ENCODE measurements at regions of chr17 and their contacts with region 1.

Region 1: GRCh38 chr17:37650419-37651003 is 7.3 kb upstream of the DDX52 start:
- DNase-seq: peak; percentile 19 to 48
- H3K4me3 ChIP-seq: no peak overlapping the region
- H3K27ac ChIP-seq: no peak overlapping the region
- H3K4me1 ChIP-seq: peaks cover 11% of the 10 kb centered on the region
- H3K27me3 ChIP-seq: no peaks in the 10 kb centered on the region
- CTCF ChIP-seq: peak; percentile 68

Region 2: DNA sequence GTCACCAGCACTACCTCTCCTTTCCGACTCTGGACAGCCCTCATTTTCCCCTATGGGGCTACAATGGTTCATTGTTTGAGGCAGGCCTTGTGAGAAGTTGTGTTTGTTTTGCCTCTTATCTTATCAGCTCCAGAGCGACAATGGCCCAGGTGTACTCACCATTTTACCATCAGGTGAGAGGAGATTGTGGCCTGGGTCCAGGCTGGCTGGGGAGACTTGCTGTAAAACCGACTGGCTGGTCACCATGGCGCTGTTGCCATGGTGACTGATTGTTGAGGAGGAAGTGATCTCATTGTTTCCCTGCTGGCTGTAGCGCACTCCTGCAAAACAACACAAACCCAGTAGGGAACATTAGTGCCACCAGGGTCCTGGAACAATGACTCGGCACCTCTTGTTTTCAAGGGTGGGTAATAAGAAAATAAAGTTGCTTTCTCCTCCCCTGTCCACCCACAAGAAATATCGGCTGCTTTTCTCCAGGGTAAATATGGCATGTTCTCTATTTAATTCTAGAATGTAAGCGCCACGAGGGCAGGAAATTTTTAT is 59.9 kb after region 1 on chr17:
- CTCF ChIA-PET with region 1: no interaction called
- POLR2A ChIA-PET with region 1: no interaction called
- intact Hi-C with region 1: no loop called
- DNase-seq: peak; percentile 75
- H3K4me3 ChIP-seq: no peak overlapping the region
- H3K27ac ChIP-seq: no peak overlapping the region
- H3K4me1 ChIP-seq: peaks cover 8% of the 10 kb centered on the region; the same call in 1 of the 2 replicates
- H3K27me3 ChIP-seq: no peaks in the 10 kb centered on the region
- CTCF ChIP-seq: no peak

Region 3: GRCh38 chr17:37818689-37819088 is 168.2 kb after region 1 on chr17:
- CTCF ChIA-PET with region 1: interaction called, 22 read pairs
- POLR2A ChIA-PET with region 1: no interaction called
- intact Hi-C with region 1: loop called (anchors 1 kb)
- DNase-seq: peak; percentile 73 to 77
- H3K4me3 ChIP-seq: no peak overlapping the region
- H3K27ac ChIP-seq: no peak overlapping the region
- H3K4me1 ChIP-seq: no peaks in the 10 kb centered on the region
- H3K27me3 ChIP-seq: 0 out of 2 replicates have a peak, but pooled peaks cover 4% of the 10 kb centered on the region
- CTCF ChIP-seq: no peak

Region 4: GRCh38 chr17:38579083-38579480 is 928.6 kb after region 1 on chr17:
- CTCF ChIA-PET with region 1: interaction called, 14 read pairs
- POLR2A ChIA-PET with region 1: no interaction called
- intact Hi-C with region 1: no loop called
- DNase-seq: no peak
- H3K4me3 ChIP-seq: no peak overlapping the region
- H3K27ac ChIP-seq: no peak overlapping the region
- H3K4me1 ChIP-seq: peaks cover 35% of the 10 kb centered on the region
- H3K27me3 ChIP-seq: no peaks in the 10 kb centered on the region
- CTCF ChIP-seq: no peak

Measured in PC-9 (cell line).